Activated CD4-positive, alpha-beta T cell treated with anti-CD3 and anti-CD28 coated beads for 36 hours (primary cell): ENCODE measurements at regions of chr1 and their contacts with region 1.

Region 1: GRCh38 chr1:103911450-103911849 is 161.8 kb downstream of the AMY1C start:
- DNase-seq: no peak
- ATAC-seq: no peak
- H3K4me3 Mint-ChIP-seq: no peak overlapping the region
- H3K27ac Mint-ChIP-seq: no peak overlapping the region
- H3K4me1 Mint-ChIP-seq: no peaks in the 10 kb centered on the region
- H3K27me3 Mint-ChIP-seq: no peaks in the 10 kb centered on the region

Region 2: GRCh38 chr1:103859721-103860120 is 51.7 kb before region 1 on chr1:
- CTCF ChIA-PET with region 1: no interaction called
- POLR2A ChIA-PET with region 1: no interaction called
- intact Hi-C with region 1: loop called in 1 of 2 experiments (anchors 5 kb)
- DNase-seq: no peak
- ATAC-seq: no peak
- H3K4me3 Mint-ChIP-seq: no peak overlapping the region
- H3K27ac Mint-ChIP-seq: no peak overlapping the region
- H3K4me1 Mint-ChIP-seq: no peaks in the 10 kb centered on the region
- H3K27me3 Mint-ChIP-seq: no peaks in the 10 kb centered on the region